ENCODE measurements at regions of chr20 and their contacts with region 1.

Region 1: DNA sequence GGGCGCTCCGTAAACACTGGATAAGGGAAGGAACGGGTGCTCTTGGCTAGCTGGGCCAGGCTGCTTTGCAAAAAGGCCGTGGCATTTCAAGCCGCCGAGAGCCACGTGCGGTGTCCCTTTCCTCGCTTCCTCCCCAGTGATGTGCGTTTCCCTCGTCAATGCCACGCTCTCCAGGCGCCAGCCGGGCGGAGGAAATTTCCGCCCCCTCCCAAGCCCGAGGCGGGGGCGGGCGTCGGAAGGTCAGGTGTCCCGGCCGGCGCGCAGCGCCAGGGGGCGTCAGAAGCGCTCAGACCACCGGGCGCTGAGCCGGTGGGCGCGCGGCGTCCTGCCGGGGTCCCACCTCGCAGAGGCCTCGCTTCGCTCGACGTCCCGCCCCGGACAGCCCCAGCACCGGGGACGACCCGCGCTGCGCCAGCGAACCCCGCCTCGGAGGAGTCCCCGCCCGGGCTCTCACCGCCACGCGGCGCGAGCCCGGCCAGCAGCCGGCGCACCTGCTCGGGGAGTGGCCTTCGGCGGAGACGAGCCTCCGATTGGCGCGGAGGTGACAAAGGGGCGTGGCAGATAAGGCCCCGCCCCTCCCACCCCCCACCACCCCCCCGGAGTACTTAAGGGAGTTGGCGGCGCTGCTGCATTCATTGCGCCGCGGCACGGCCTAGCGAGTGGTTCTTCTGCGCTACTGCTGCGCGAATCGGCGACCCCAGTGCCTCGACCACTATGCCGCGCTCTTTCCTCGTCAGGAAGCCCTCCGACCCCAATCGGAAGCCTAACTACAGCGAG is at the start of gene SNAI1:
- DNase-seq: peak; percentile 84 to 87
- H3K4me3 ChIP-seq: peak within 1 kb of the TSS; percentile 65 to 72 (median 66)
- H3K27ac ChIP-seq: peak within 1 kb of the TSS; percentile 60 to 91 (median 88)
- H3K4me1 ChIP-seq: peaks cover 45 to 56% of the 10 kb centered on the region in 2 donors
- H3K27me3 ChIP-seq: no peaks in the 10 kb centered on the region
- CTCF ChIP-seq: peak in 5 of 6 experiments; percentile 19 to 79 (median 63)
- POLR2A ChIP-seq: peak; percentile 94 to 95
- total RNA-seq, gene SNAI1: 8.2 to 14.1 (median 9.9) TPM

Region 2: GRCh38 chr20:49054056-49054643 is 928.4 kb before region 1 on chr20:
- intact Hi-C with region 1: no loop called
- DNase-seq: no peak
- H3K4me3 ChIP-seq: no peak overlapping the region
- H3K27ac ChIP-seq: no peak overlapping the region
- H3K4me1 ChIP-seq: peaks cover 2 to 4% of the 10 kb centered on the region in 2 donors
- H3K27me3 ChIP-seq: no peaks in the 10 kb centered on the region
- CTCF ChIP-seq: no peak
- POLR2A ChIP-seq: no peak

Region 3: GRCh38 chr20:50070991-50071888 is 88.7 kb after region 1 on chr20:
- intact Hi-C with region 1: loop called (anchors 2 kb)
- DNase-seq: peak; percentile 89 to 92
- H3K4me3 ChIP-seq: peak overlapping the region in 1 of 3 donors; percentile 14
- H3K27ac ChIP-seq: no peak overlapping the region
- H3K4me1 ChIP-seq: peaks cover 8 to 15% of the 10 kb centered on the region in 2 donors
- H3K27me3 ChIP-seq: no peaks in the 10 kb centered on the region
- CTCF ChIP-seq: peak; percentile 98 to 100 (median 99)
- POLR2A ChIP-seq: no peak

Region 4: GRCh38 chr20:50085452-50086365 is 103.2 kb after region 1 on chr20:
- intact Hi-C with region 1: no loop called
- DNase-seq: peak; percentile 46 to 54
- H3K4me3 ChIP-seq: peak overlapping the region in 1 of 3 donors; percentile 11
- H3K27ac ChIP-seq: peak overlapping the region; percentile 29 to 71 (median 36)
- H3K4me1 ChIP-seq: peaks cover 23 to 27% of the 10 kb centered on the region in 2 donors
- H3K27me3 ChIP-seq: no peaks in the 10 kb centered on the region
- CTCF ChIP-seq: peak; percentile 57 to 83 (median 79)
- POLR2A ChIP-seq: no peak

Region 5: GRCh38 chr20:50153485-50154377 is 171.2 kb after region 1 on chr20 and contains the start of gene PEDS1:
- intact Hi-C with region 1: loop called (anchors 10 kb)
- DNase-seq: peak; percentile 91 to 92
- H3K4me3 ChIP-seq: peak within 1 kb of the TSS; percentile 77 to 84 (median 80)
- H3K27ac ChIP-seq: peak within 1 kb of the TSS; percentile 81 to 92 (median 89)
- H3K4me1 ChIP-seq: peaks cover 42 to 45% of the 10 kb centered on the region in 2 donors
- H3K27me3 ChIP-seq: no peaks in the 10 kb centered on the region
- CTCF ChIP-seq: peak in 2 of 6 experiments; percentile 9 to 15
- POLR2A ChIP-seq: peak; percentile 93 to 96
- total RNA-seq, gene PEDS1: 15.8 to 22.7 (median 19.7) TPM

Region 6: DNA sequence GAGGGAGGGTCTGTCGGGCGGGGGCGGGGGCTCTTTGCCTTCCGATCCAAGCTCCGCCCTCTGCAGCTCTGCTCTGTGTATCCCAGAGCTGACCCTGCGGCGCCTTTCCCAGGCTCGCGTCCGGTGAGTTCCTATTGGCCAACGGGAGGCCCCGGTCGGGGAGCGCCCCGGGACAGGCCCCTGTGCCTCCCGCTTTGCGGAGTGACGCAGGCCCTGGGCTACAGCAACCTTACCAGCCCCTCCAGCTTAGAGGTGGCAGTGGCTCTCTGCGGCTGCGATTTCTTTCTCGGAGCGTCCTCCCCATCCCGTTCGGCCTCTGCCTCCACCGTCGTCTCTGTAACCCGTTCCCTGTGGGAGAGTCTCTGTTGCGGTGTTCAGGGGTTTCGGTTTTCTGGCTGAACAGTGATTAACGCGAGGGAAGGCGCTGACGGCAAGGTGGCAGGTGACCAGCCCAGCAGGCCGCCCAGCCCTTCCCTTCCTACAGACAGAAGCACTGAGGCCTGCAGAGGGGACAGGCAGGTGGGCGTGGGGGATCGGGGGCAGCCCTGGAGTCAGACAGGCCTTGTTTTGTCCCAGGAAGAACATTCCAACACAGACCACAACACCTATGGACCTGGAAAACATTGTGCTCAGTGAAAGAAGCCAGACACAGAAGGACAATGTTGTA is 189.9 kb after region 1 on chr20:
- intact Hi-C with region 1: loop called (anchors 10 kb)
- DNase-seq: peak; percentile 84 to 87
- H3K4me3 ChIP-seq: peak overlapping the region; percentile 13 to 37 (median 30)
- H3K27ac ChIP-seq: peak overlapping the region; percentile 75 to 88 (median 78)
- H3K4me1 ChIP-seq: peaks cover 7 to 18% of the 10 kb centered on the region in 2 donors
- H3K27me3 ChIP-seq: no peaks in the 10 kb centered on the region
- CTCF ChIP-seq: no peak
- POLR2A ChIP-seq: peak; percentile 17 to 79

Measured in thyroid gland (tissue), 4 donors.